GM10248 (cell line): ENCODE measurements at regions of chr11 and their contacts with region 1.

Region 1: DNA sequence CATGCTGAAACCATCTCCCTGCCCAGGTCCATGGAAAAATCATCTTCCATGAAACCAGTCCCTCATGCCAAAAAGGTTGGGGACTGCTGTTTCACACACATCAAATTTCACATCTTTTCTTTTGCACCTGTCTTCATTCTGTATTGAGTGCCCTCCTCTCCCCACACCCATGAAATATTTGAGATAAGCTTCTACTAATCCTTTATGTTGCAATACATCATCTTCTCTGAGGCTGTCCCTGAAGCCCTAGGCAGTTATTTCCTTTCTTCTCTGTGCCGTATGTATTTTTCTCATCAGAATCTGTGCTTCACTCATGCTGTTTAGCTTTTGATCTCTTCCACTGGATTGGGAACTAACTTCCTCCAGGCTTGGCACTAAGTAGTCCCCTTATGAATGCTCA is 40.0 kb upstream of the RRM1 start:
- DNase-seq: no peak
- CTCF ChIP-seq: no peak

Region 2: GRCh38 chr11:4027746-4028145 is 26.9 kb before region 1 on chr11:
- CTCF ChIA-PET with region 1: no interaction called
- POLR2A ChIA-PET with region 1: no interaction called
- DNase-seq: no peak
- CTCF ChIP-seq: no peak

Region 3: DNA sequence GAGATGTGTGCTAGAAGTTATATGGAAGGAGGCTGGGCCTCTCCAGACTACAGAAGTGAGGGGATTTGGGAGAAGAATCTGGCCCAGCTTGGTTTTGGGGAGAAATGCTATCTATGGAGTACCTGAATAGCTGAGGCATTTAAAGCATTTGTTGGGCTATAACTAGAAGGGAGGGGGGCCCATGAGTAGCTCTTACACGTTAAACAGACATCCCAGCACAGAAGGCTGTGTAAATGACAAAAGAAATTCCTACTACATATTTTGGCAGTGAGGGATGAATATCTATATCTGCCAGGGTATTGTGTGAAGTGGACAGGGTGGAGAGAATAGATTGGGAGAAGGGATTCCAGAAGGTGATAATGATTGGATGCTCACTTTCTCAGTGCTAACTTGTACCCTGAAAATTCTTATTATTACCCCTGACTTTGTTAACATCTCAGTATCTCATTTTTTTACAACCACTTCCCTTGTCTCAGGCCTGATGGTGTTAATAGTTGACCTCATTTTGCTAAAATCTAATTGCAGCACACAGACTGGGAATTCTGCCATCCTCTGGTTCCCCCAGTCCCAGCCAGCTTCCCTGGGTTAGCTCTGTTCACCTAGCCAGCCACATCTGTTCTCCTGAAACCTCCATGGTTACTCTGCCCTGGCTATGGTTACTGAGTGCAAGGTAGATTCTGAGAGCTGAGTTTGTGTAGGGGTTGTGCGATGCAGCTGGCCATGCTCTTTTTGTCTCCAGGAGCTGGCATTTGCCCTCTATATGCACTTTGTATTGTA is 11.1 kb after region 1 on chr11:
- CTCF ChIA-PET with region 1: interaction called, 18 read pairs
- POLR2A ChIA-PET with region 1: interaction called, 4 read pairs
- DNase-seq: no peak
- CTCF ChIP-seq: no peak